CD4-positive, alpha-beta memory T cell (primary cell): ENCODE measurements at regions of chr10 and their contacts with region 1.

Region 1: GRCh38 chr10:11684717-11685645 is 57.2 kb upstream of the ECHDC3 start:
- DNase-seq: peak; percentile 75 to 87 (median 80)
- H3K4me3 ChIP-seq: peak overlapping the region; percentile 7 to 24
- H3K4me3 Mint-ChIP-seq: peak overlapping the region; percentile 85 to 93 (median 90)
- H3K27ac ChIP-seq: peak overlapping the region; percentile 71
- H3K27ac Mint-ChIP-seq: peak overlapping the region; percentile 94 to 100 (median 98)
- H3K4me1 ChIP-seq: peaks cover 37% of the 10 kb centered on the region
- H3K4me1 Mint-ChIP-seq: peaks cover 26 to 46% (median 39%) of the 10 kb centered on the region in 4 donors
- H3K27me3 ChIP-seq: no peaks in the 10 kb centered on the region
- H3K27me3 Mint-ChIP-seq: no peaks in the 10 kb centered on the region

Region 2: DNA sequence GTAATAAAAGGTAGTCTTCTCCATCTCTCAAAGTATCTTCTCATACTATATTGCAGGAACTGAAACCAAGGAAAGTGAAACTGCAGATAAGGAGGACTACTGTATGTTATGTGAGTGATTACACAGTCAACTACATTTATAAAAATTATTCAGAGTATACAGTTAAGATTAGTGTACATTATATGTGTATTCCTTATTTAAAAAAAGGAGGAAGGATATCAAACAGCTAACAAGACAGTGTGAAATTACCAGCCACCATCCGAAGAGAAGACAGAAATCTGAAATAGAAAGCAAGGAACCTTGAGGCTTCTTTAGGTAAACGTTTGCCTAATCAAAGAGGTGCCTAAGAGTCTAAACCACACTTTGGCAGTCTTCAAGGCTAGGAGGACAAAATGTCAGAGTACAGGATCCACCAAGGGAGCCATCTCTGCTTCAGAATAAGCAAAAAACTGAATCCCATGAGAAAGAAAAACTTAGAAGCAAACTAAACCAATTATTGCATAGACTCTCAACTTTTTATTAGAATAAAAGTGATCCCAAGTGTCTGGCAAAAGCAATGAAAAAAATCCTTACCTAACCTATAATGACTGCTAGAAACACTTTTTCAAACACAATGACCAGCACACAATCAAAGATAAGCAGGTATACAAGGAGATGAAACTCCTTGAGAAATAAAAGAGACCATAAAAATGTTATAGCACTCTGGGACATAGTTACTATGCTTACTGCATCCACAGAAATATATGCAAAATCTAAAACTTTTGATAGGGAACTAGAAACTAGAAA is 79.9 kb before region 1 on chr10:
- CTCF ChIA-PET with region 1: no interaction called
- POLR2A ChIA-PET with region 1: interaction called, 6 read pairs
- intact Hi-C with region 1: loop called (anchors 2 kb)
- DNase-seq: no peak
- H3K4me3 ChIP-seq: no peak overlapping the region
- H3K4me3 Mint-ChIP-seq: peak overlapping the region; percentile 33 to 83 (median 54)
- H3K27ac ChIP-seq: no peak overlapping the region
- H3K27ac Mint-ChIP-seq: peak overlapping the region in 4 of 7 donors; percentile 41 to 67 (median 56)
- H3K4me1 ChIP-seq: peaks cover 44% of the 10 kb centered on the region
- H3K4me1 Mint-ChIP-seq: peaks cover 29 to 54% (median 43%) of the 10 kb centered on the region in 4 donors
- H3K27me3 ChIP-seq: no peaks in the 10 kb centered on the region
- H3K27me3 Mint-ChIP-seq: peaks cover 1 to 2% of the 10 kb centered on the region in 2 donors

Region 3: GRCh38 chr10:11611248-11612020 is 73.5 kb before region 1 on chr10 and contains the start of gene USP6NL:
- CTCF ChIA-PET with region 1: no interaction called
- POLR2A ChIA-PET with region 1: interaction called, 16 read pairs
- intact Hi-C with region 1: loop called (anchors 2 kb)
- DNase-seq: peak; percentile 48 to 66 (median 59)
- H3K4me3 ChIP-seq: peak within 1 kb of the TSS; percentile 46 to 71
- H3K4me3 Mint-ChIP-seq: peak within 1 kb of the TSS; percentile 89 to 95 (median 94)
- H3K27ac ChIP-seq: peak within 1 kb of the TSS; percentile 25
- H3K27ac Mint-ChIP-seq: peak within 1 kb of the TSS; percentile 80 to 94 (median 91)
- H3K4me1 ChIP-seq: peaks cover 27% of the 10 kb centered on the region
- H3K4me1 Mint-ChIP-seq: peaks cover 24 to 42% (median 39%) of the 10 kb centered on the region in 4 donors
- H3K27me3 ChIP-seq: no peaks in the 10 kb centered on the region
- H3K27me3 Mint-ChIP-seq: peaks cover 1 to 2% of the 10 kb centered on the region in 2 donors
- total RNA-seq, gene USP6NL: 3.9 to 4.8 TPM

Region 4: DNA sequence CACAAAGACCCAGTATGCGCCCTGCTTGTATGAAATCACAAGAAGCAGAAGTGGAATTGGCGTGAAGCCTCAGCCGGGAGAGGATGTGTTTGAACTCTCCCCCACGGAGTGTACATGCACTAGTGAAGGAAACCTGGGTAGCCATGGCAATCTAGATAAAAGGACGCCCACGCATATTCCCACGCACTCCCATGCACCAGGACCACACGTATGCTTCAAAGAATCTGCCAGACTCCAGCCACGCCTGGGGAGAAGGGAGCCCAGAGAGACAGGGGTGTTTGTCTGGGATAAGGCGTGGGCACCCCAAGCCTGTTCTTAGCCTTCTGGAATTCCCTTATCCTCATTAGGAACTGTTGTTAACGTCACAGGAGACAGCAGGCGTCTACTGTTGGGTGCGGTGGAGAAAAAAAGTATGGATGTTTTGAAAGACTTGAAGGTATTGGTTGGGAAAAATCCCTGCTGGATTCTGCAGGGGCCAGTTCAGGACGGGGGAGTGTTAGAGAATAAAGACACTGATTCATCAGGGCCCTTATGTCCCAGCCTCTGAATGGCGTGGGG is 28.3 kb after region 1 on chr10:
- CTCF ChIA-PET with region 1: no interaction called
- POLR2A ChIA-PET with region 1: no interaction called
- intact Hi-C with region 1: loop called (anchors 2 kb)
- DNase-seq: no peak
- H3K4me3 ChIP-seq: no peak overlapping the region
- H3K4me3 Mint-ChIP-seq: peak overlapping the region in 1 of 8 donors; percentile 31
- H3K27ac ChIP-seq: no peak overlapping the region
- H3K27ac Mint-ChIP-seq: no peak overlapping the region
- H3K4me1 ChIP-seq: peaks cover 14% of the 10 kb centered on the region
- H3K4me1 Mint-ChIP-seq: peaks cover 9 to 15% (median 11%) of the 10 kb centered on the region in 4 donors
- H3K27me3 ChIP-seq: no peaks in the 10 kb centered on the region
- H3K27me3 Mint-ChIP-seq: peaks cover 3 to 4% of the 10 kb centered on the region in 2 donors

Region 5: DNA sequence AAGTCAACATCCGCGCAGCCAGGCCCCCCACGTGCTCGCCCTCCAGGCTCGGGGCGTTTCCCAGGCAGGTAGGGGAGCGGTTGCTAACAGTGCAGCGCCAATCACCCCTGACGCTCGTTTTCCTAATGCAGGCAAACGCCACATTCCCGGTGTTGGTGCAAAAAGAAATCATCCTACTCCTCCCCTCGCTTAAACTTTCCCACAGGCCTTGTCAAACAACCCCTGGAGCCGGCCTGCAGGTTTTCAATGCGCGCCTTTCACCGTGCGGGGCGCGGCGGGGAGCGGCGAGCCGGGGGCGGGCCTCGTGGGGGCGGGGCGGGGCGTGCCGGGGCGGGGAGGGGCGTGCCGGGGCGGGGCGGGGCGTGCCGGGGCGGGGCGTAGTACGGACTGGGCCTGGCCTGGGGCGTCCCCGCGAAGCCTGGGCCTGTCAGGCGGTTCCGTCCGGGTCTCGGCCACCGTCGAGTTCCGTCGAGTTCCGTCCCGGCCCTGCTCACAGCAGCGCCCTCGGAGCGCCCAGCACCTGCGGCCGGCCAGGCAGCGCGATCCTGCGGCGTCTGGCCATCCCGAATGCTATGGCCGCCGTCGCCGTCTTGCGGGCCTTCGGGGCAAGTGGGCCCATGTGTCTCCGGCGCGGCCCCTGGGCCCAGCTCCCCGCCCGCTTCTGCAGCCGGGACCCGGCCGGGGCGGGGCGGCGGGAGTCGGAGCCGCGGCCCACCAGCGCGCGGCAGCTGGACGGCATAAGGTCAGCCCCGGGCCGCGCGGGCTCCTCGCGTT is 57.2 kb after region 1 on chr10 and contains the start of gene ECHDC3:
- CTCF ChIA-PET with region 1: no interaction called
- POLR2A ChIA-PET with region 1: no interaction called
- intact Hi-C with region 1: loop called (anchors 10 kb)
- DNase-seq: peak; percentile 17 to 48 (median 37)
- H3K4me3 ChIP-seq: peak within 1 kb of the TSS in 1 of 2 donors; percentile 19
- H3K4me3 Mint-ChIP-seq: peak within 1 kb of the TSS; percentile 43 to 84 (median 76)
- H3K27ac ChIP-seq: no peak within 1 kb of the TSS
- H3K27ac Mint-ChIP-seq: peak within 1 kb of the TSS in 1 of 7 donors; percentile 64
- H3K4me1 ChIP-seq: peaks cover 7% of the 10 kb centered on the region
- H3K4me1 Mint-ChIP-seq: peaks cover 4 to 19% (median 11%) of the 10 kb centered on the region in 4 donors
- H3K27me3 ChIP-seq: no peaks in the 10 kb centered on the region
- H3K27me3 Mint-ChIP-seq: peaks cover 12 to 13% of the 10 kb centered on the region in 2 donors
- total RNA-seq, gene ECHDC3: 0.47 to 0.49 TPM